ENCODE measurements at regions of chr3 and their contacts with region 1.

Region 1: DNA sequence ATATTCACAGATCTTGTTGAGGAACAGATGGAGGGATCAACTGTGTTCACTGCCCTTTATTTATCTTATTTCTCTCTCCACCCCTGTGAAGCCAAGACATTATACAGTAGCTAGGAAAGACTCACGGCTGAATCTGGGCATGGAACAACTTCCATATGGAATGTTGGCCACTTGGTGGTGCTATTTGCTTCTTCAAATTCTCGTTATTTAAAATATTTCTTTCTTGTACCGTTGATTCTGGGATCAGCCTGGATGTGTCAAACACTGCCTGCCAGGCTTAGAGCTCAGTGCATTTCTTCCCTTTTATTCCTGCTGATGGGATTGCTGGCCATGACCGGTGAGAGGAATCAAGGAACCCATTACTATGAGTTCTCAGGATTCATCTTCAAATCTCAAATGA is 17.5 kb upstream of the GASK1A start:
- DNase-seq: peak in 1 of 2 donors; percentile 34
- ATAC-seq: peak; percentile 66

Region 2: DNA sequence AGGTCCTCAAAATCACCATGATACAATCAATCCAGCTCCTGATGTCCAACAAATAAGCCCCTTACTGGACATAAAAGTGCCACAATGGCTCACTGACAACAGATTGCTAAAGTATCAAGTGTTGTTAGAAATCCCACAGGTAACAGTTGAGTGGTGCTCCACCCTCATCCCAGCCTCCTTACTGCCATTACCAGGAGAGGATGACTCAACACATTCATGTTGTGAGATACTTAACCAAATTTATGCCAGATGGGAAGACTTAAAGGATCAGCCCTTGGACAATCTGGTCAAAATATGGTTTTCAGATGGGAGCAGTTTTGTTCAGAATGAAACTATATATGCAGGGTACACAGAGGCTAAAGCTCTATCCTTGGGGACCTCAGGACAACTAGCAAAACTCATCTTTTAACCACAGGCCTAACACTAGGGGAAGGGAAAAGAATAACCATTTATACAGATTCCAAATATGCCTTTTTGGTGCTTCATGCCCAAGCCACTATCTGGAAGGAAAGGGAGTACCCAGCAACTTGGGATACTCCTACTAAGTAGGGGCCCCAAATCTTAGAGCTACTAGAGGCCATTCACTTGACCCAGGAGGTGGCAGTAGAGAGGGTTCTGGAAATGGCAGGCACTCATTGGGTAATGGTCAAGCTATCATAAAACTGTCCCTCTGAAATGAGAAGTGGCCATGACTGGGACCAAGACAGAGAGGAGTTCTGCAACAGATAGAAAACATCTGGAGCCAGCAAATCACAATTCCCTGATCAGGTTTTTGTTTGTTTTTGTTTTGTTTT is 62.6 kb before region 1 on chr3:
- intact Hi-C with region 1: no loop called
- DNase-seq: no peak
- ATAC-seq: no peak

Region 3: GRCh38 chr3:43155464-43156121 is 194.0 kb after region 1 on chr3:
- intact Hi-C with region 1: loop called in 1 of 2 experiments (anchors 5 kb)
- DNase-seq: peak; percentile 39 to 52
- ATAC-seq: peak; percentile 94

Measured in left colon (tissue), 2 donors.